ENCODE measurements at regions of chr6 and their contacts with region 1.

Region 1: GRCh38 chr6:117947234-117947633 is 40.2 kb downstream of the SLC35F1 start:
- DNase-seq: no peak
- H3K4me3 Mint-ChIP-seq: no peak overlapping the region
- H3K27ac Mint-ChIP-seq: no peak overlapping the region
- H3K4me1 Mint-ChIP-seq: no peaks in the 10 kb centered on the region
- H3K27me3 Mint-ChIP-seq: peaks cover 18% of the 10 kb centered on the region
- CTCF ChIP-seq: no peak

Region 2: DNA sequence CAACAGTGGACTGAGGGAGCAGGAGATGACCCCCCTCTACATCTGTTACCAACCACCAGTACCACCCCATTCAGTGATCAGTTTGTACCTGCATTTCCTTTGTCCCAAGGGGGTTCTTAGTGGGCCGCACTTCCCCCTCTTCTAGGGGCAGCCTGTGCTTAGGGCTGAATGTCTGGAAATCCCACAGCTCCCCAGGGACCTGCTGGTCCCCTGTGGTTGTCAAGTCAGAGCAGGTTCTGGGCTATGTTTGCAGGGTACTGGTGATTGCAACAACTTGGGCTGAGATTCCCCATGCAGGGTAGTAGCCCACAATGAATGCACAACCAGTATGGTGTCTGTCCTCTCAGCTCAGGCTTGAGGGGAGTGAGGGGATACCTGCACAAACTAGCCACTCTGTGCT is 1781.6 kb before region 1 on chr6:
- CTCF ChIA-PET with region 1: no interaction called
- POLR2A ChIA-PET with region 1: no interaction called
- intact Hi-C with region 1: loop called (anchors 10 kb)
- DNase-seq: no peak
- H3K4me3 Mint-ChIP-seq: no peak overlapping the region
- H3K27ac Mint-ChIP-seq: no peak overlapping the region
- H3K4me1 Mint-ChIP-seq: peaks cover under 1% of the 10 kb centered on the region
- H3K27me3 Mint-ChIP-seq: no peaks in the 10 kb centered on the region
- CTCF ChIP-seq: no peak